Thyroid gland (tissue), 4 donors: ENCODE measurements at regions of chr1 and their contacts with region 1.

Region 1: DNA sequence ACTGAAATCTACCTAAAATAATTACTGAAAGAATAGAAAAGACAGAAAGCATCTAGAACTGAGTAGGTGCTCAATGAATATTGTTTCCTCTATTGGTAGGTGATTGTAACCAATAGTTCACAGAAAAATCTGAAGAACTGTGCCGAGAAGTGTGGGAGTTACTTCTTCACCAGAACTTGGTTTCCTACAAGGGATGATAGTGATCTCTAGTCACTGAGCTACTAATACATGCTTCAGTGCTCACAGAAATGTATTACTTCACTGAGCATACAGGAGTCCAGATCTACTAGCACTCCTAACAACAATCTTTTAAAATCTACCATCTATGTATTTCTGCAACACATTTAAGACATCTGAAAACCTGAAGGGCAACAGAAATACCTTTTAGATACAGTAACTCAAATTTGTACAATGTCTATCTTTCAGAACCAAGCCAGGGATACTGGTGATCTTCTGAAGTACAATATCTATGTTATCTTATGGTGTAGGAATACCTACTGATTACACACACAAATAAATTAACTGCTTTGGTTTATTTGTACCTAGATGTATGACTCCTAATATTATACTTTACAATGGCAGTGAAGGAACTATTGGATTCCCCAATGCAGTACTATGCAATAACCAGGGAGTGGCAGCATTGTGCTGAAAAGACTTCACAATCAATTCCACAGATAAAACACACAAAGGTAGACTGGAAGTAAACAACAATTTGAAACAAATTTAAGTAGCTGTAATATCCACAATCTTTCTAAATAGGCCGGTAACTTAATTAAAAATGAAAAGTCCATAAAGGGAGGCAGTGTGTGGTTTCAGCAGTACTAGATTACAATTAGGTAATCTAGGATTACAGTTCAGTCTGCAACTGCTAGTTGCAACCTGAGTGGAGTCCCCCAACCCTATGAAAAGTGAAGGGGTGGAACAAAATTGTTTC is 243.0 kb downstream of the SLC45A1 start:
- DNase-seq: no peak
- H3K4me3 ChIP-seq: no peak overlapping the region
- H3K27ac ChIP-seq: peak overlapping the region; percentile 27 to 51 (median 47)
- H3K4me1 ChIP-seq: peaks cover 31 to 42% of the 10 kb centered on the region in 2 donors
- H3K27me3 ChIP-seq: no peaks in the 10 kb centered on the region
- CTCF ChIP-seq: peak; percentile 54 to 96 (median 86)
- POLR2A ChIP-seq: peak in 1 of 2 donors; percentile 11

Region 2: GRCh38 chr1:8671306-8671917 is 110.5 kb after region 1 on chr1:
- intact Hi-C with region 1: loop called (anchors 10 kb)
- DNase-seq: peak; percentile 32 to 37
- H3K4me3 ChIP-seq: no peak overlapping the region
- H3K27ac ChIP-seq: no peak overlapping the region
- H3K4me1 ChIP-seq: peaks cover 22 to 46% of the 10 kb centered on the region in 2 donors
- H3K27me3 ChIP-seq: no peaks in the 10 kb centered on the region
- CTCF ChIP-seq: peak; percentile 54 to 84 (median 70)
- POLR2A ChIP-seq: no peak

Region 3: GRCh38 chr1:8727809-8728213 is 166.9 kb after region 1 on chr1:
- intact Hi-C with region 1: loop called (anchors 5 kb)
- DNase-seq: peak in 1 of 2 donors; percentile 35
- H3K4me3 ChIP-seq: no peak overlapping the region
- H3K27ac ChIP-seq: no peak overlapping the region
- H3K4me1 ChIP-seq: peaks cover 9 to 25% of the 10 kb centered on the region in 2 donors
- H3K27me3 ChIP-seq: no peaks in the 10 kb centered on the region
- CTCF ChIP-seq: no peak
- POLR2A ChIP-seq: no peak